PC-9 (cell line): ENCODE measurements at regions of chr2 and their contacts with region 1.

Region 1: GRCh38 chr2:191245046-191245868 is at the start of gene MYO1B:
- DNase-seq: peak; percentile 61 to 83
- H3K4me3 ChIP-seq: peak within 1 kb of the TSS; percentile 92
- H3K27ac ChIP-seq: peak within 1 kb of the TSS; percentile 61
- H3K4me1 ChIP-seq: peaks cover 25% of the 10 kb centered on the region
- H3K27me3 ChIP-seq: no peaks in the 10 kb centered on the region
- CTCF ChIP-seq: peak; percentile 58
- total RNA-seq, gene MYO1B: 48.5 and 55.0 TPM in 2 replicates

Region 2: GRCh38 chr2:191171708-191172355 is 73.4 kb before region 1 on chr2:
- CTCF ChIA-PET with region 1: interaction called, 3 read pairs
- POLR2A ChIA-PET with region 1: interaction called, 4 read pairs
- intact Hi-C with region 1: loop called (anchors 2 kb)
- DNase-seq: peak; percentile 33 to 85
- H3K4me3 ChIP-seq: no peak overlapping the region
- H3K27ac ChIP-seq: peak overlapping the region; percentile 91
- H3K4me1 ChIP-seq: peaks cover 61% of the 10 kb centered on the region
- H3K27me3 ChIP-seq: no peaks in the 10 kb centered on the region
- CTCF ChIP-seq: no peak

Region 3: DNA sequence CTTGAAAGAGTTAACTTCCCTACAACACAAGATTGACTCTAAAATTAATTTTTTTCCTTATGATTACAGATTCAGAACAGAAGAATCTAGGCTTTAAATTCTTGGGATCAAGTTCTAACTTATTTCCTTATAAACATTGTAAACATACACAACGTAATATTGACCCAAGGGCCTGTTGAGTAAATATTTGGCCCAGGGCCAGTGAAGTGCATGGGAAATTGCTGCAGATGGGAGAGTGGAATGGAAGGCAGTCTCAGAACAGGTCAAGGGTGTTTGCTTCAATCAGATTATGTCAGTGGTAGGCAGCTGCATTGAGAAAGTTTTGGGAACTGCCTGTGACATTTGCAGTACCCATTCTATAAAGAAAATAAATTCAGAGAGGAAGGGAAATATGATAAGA is 137.5 kb after region 1 on chr2:
- CTCF ChIA-PET with region 1: no interaction called
- POLR2A ChIA-PET with region 1: no interaction called
- intact Hi-C with region 1: loop called (anchors 5 kb)
- DNase-seq: peak; percentile 46 to 90
- H3K4me3 ChIP-seq: no peak overlapping the region
- H3K27ac ChIP-seq: peak overlapping the region; percentile 76
- H3K4me1 ChIP-seq: peaks cover 18% of the 10 kb centered on the region
- H3K27me3 ChIP-seq: no peaks in the 10 kb centered on the region
- CTCF ChIP-seq: no peak

Region 4: GRCh38 chr2:191501561-191502168 is 256.4 kb after region 1 on chr2:
- CTCF ChIA-PET with region 1: no interaction called
- POLR2A ChIA-PET with region 1: no interaction called
- intact Hi-C with region 1: loop called (anchors 1 kb)
- DNase-seq: no peak
- H3K4me3 ChIP-seq: no peak overlapping the region
- H3K27ac ChIP-seq: no peak overlapping the region
- H3K4me1 ChIP-seq: no peaks in the 10 kb centered on the region
- H3K27me3 ChIP-seq: no peaks in the 10 kb centered on the region
- CTCF ChIP-seq: peak; percentile 57